Dorsolateral prefrontal cortex (tissue), 120 donors: ENCODE measurements at regions of chr4 and their contacts with region 1.

Region 1: DNA sequence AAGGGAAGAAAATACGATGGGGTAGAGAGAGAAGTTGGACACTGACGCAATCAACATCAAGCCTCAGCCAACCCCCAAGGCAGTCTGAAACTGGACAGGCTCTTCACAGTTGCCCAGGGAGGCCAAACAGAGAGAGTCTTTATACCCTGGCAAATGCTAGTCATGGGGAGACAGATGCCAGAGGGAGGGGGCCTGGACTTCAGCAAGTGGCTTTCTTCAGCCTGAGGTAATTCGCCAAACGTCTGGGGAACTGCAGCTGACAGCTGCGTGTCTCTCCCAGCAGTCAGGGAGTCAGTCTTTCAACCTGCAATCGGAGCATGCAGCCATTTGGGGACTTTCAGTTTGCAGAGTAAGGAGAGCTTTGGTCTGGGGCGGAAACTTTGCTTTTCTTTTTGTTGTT is 521.6 kb downstream of the TRIML1 start:
- DNase-seq: peak in 9 of 10 donors; percentile 37 to 86 (median 73)
- H3K4me3 ChIP-seq: peak overlapping the region in 30 of 59 donors; percentile 1 to 50 (median 24)
- H3K27ac ChIP-seq: peak overlapping the region in 33 of 59 donors; percentile 5 to 81 (median 57)
- H3K27me3 ChIP-seq: no peaks in the 10 kb centered on the region
- CTCF ChIP-seq: no peak

Region 2: DNA sequence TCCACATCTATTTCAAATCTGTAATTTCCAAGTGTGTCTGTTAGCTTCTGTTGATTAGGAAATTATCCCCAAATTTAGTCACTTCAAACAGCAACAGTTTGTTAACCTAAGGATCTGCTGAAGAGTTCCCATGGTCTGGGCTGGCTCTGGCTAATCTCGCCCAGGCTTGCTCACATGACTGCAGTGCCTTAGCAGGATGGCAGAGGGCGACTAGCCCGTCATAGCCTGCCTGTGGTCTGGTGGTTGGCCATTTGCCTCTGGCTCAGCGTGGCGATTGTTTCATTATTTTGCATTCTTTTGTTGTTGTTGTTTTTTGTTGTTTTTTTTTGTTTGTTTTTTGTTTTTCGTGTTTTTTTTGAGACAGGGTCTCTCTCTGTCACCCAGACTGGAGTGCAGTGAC is 257.5 kb before region 1 on chr4:
- intact Hi-C with region 1: loop called in 1 of 2 experiments (anchors 10 kb)
- DNase-seq: no peak
- H3K4me3 ChIP-seq: no peak overlapping the region
- H3K27ac ChIP-seq: no peak overlapping the region
- H3K27me3 ChIP-seq: no peaks in the 10 kb centered on the region
- CTCF ChIP-seq: no peak